Body of pancreas (tissue), 4 donors: ENCODE measurements at regions of chr19 and their contacts with region 1.

Region 1: DNA sequence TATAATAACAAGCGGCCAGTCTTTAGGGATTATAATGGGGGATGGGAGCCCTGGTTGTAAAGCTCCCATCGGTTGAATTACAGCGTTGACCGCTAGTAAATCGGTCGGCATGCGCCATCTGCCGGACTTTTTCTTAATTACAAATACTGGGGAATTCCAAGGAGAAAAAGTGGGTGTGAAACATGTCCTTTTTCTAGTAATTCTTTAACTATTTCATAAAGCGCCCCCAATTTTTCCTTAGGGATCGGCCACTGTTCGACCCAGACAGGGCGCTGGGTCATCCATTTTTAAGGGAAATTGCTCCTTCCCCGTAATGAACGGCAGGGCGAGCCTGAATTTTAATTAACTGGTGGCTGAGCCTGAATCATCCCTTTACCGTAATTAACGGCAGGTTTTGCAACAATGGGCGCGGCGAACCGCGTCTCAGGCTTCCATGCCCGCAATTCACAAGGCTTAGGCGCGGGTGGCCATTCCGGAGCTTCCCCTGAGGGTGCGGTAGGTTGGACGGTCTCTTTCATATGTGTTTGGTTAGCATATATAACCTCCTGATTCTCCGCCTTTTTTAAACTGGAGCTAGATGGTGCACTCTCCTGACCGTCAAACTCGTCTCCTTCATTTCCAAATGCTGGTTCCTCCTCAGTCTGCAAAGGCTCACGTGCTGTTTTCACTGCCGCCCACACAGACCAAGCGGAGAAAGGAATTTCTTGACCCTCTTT is 30.2 kb upstream of the EVI5L start:
- DNase-seq: peak; percentile 68 to 78 (median 72)
- ATAC-seq: peak; percentile 59
- H3K4me3 ChIP-seq: no peak overlapping the region
- H3K27ac ChIP-seq: no peak overlapping the region
- H3K4me1 ChIP-seq: no peaks in the 10 kb centered on the region
- H3K27me3 ChIP-seq: peaks cover 0 to 9% of the 10 kb centered on the region in 2 donors
- CTCF ChIP-seq: peak; percentile 33 to 89 (median 59)
- POLR2A ChIP-seq: no peak

Region 2: DNA sequence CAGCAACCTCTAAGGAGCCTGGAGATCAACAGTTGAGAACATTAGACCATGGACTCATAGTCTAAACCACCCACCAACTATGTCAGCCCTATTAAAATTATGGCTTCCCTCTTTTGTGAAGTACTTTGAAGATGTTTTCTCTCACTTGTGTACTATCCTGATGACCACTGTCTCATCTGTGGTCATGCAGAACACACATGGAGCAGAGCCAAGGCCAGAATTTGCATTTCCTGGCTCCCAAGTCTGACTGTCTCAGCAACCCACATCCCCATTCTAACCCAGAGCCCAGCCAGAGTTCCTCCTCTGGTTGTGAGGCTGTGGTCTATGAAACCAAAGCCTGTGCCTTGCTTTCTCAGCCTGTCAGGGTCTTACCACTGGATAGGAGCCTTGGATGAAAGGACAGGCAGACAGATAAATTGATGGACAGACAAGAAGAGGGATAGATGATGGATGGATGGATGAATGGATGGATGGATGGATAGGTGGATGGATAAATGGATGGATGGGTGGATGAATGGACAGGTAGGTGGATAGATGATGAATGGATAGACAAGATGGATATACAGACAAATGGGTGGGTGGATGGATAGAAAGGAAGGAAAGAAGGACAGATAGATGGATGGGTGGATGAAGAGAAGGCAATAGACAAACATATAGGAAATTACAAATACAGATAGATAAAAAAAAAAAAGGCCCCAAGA is 694.9 kb before region 1 on chr19:
- intact Hi-C with region 1: loop called (anchors 10 kb)
- DNase-seq: peak in 1 of 4 donors; percentile 64
- ATAC-seq: no peak
- H3K4me3 ChIP-seq: no peak overlapping the region
- H3K27ac ChIP-seq: no peak overlapping the region
- H3K4me1 ChIP-seq: peaks cover 18% of the 10 kb centered on the region
- H3K27me3 ChIP-seq: no peaks in the 10 kb centered on the region
- CTCF ChIP-seq: no peak
- POLR2A ChIP-seq: no peak

Region 3: GRCh38 chr19:7348587-7349230 is 451.1 kb before region 1 on chr19 and contains the start of gene ARHGEF18:
- intact Hi-C with region 1: loop called (anchors 10 kb)
- DNase-seq: peak in 1 of 4 donors; percentile 55
- ATAC-seq: no peak
- H3K4me3 ChIP-seq: no peak within 1 kb of the TSS
- H3K27ac ChIP-seq: no peak within 1 kb of the TSS
- H3K4me1 ChIP-seq: no peaks in the 10 kb centered on the region
- H3K27me3 ChIP-seq: no peaks in the 10 kb centered on the region
- CTCF ChIP-seq: no peak
- POLR2A ChIP-seq: no peak
- total RNA-seq, gene ARHGEF18: 30.0 to 51.6 TPM

Region 4: DNA sequence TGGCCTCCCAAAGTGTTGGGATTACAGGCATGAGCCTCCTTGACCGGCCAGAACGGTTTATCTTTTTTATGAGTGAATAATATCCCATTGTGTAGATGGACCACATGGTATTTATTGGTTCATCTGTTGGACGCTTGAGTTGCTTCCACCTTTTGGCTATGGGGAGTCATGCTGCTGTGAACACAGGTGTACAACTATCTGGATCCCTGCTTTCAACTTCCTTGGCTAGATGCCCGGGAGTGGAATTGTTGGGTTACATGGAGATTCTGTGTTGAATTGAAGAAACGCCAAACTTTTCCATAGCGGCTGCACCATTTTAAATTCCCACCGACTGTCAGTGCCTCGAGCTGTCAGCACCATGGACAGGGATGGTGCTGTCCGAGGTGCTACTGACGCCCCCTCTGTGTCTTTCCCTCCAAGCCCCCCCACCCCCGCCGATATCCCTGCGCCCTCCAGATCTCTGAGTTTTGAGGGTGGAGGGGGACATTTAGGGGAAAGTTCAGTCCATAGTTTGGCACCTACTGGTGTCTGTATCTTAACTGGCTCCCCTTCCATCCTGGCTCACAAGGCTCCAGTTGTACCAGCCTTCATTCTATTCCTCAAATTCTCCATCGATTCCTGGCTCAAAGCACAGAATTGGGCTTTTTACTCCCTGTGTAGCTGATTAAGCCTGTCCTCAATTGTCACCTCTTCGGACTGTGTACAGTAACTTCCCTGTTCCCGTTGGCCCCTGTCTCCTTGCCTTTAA is 237.0 kb before region 1 on chr19:
- intact Hi-C with region 1: loop called (anchors 5 kb)
- DNase-seq: peak in 2 of 4 donors; percentile 15 to 27
- ATAC-seq: no peak
- H3K4me3 ChIP-seq: no peak overlapping the region
- H3K27ac ChIP-seq: no peak overlapping the region
- H3K4me1 ChIP-seq: no peaks in the 10 kb centered on the region
- H3K27me3 ChIP-seq: no peaks in the 10 kb centered on the region
- CTCF ChIP-seq: no peak
- POLR2A ChIP-seq: no peak

Region 5: DNA sequence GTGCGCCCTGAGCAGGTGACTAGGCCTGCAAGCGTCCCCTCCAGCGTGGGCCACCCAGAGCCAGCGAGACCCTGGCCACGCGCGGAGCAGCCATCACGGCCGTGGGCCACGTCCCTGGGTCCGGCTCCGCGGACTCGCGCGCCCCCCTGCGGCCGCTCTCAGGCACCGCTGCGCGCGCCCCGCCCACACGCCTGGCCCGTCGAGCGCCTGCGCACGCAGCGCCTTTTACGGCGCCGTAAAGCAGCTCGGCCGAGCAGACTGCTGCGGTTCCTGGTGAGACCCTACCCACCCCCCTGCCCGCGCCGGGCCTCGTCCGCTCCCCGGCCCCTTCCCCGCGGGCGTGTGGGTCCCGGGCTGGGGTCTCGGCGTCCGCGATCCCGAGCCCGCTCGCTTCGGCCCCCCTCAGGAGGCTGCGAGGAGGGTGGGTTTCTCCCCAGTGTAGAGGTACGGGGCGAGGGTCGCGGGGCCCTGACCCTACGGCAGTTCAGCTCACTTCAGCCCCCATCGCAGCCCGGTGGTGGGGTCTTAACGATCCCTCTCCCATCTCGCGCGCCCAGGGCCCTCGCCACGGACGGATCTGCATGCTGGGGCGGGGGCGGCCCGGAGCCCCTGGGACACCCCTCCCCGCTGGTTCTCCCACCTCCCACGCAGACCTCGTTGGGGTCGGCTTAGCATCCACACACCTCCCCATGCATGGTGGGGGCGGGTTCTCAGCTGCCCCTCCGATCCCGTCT is 119.0 kb before region 1 on chr19 and contains the start of gene TRAPPC5:
- intact Hi-C with region 1: loop called (anchors 10 kb)
- DNase-seq: peak; percentile 86 to 90 (median 88)
- ATAC-seq: peak; percentile 92
- H3K4me3 ChIP-seq: peak within 1 kb of the TSS; percentile 69 to 99
- H3K27ac ChIP-seq: peak within 1 kb of the TSS in 3 of 4 donors; percentile 83 to 87 (median 87)
- H3K4me1 ChIP-seq: peaks cover 18% of the 10 kb centered on the region
- H3K27me3 ChIP-seq: no peaks in the 10 kb centered on the region
- CTCF ChIP-seq: peak; percentile 52 to 99 (median 99)
- POLR2A ChIP-seq: peak in 2 of 3 donors; percentile 41 to 54
- total RNA-seq, gene TRAPPC5: 10.9 to 18.7 TPM